ENCODE measurements at regions of chr10 and their contacts with region 1.

Region 1: DNA sequence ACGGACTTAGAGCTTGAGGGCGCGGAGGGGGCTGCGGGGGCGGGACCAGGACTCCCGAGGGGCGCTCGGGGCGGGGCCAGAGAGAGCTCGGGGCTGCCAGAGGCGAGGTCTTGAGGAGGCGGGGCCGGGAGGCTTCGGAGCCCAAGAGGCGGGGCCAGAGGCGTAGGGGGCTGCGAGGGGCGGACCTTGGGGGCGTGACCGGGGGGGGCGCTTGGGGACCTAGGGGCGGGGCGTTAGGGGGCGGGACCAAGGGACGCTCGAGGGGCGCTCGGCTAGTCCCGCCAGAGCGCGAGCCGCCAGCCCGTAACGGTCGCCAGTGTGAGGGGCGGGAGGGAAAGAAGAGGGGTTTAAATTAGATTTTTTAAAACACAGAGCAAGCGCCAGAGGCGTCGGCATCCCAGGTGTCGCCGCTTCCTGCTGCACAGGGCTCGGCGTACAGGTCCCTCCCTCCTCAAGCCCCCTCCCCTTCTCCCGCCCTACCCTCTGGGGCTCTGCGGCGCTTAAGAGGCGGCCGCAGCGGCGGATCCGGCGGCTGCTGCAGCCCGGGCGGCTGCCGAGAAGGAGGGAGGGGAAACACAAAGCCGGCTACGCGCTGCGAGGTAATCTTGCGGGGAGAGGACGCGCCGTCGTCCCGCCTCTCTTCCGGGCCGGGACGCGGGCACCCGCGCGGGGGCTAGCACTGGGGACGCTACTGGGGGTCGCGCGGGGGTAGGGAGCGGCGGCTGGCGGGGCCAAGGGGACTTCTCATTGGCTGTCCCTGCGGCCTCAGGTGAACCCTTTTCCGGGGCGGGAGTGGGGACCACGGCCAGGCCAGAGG is at the start of gene ADD3:
- DNase-seq: peak; percentile 97
- H3K4me3 ChIP-seq: peak within 1 kb of the TSS; percentile 85 to 93 (median 91)
- H3K27ac ChIP-seq: peak within 1 kb of the TSS; percentile 89 to 96 (median 94)
- H3K4me1 ChIP-seq: peaks cover 40 to 62% (median 46%) of the 10 kb centered on the region in 4 donors
- H3K27me3 ChIP-seq: peaks cover 0 to 3% (median 0%) of the 10 kb centered on the region in 4 donors
- CTCF ChIP-seq: no peak
- EP300 ChIP-seq: no peak
- POLR2A ChIP-seq: peak; percentile 36
- total RNA-seq, gene ADD3: 60.1 to 228 (median 99.2) TPM

Region 2: GRCh38 chr10:109912335-109913281 is 95.3 kb before region 1 on chr10:
- intact Hi-C with region 1: no loop called
- DNase-seq: no peak
- H3K4me3 ChIP-seq: no peak overlapping the region
- H3K27ac ChIP-seq: peak overlapping the region; percentile 37 to 75 (median 52)
- H3K4me1 ChIP-seq: peaks cover 0 to 32% (median 14%) of the 10 kb centered on the region in 4 donors
- H3K27me3 ChIP-seq: no peaks in the 10 kb centered on the region
- CTCF ChIP-seq: no peak
- EP300 ChIP-seq: no peak
- POLR2A ChIP-seq: no peak

Region 3: DNA sequence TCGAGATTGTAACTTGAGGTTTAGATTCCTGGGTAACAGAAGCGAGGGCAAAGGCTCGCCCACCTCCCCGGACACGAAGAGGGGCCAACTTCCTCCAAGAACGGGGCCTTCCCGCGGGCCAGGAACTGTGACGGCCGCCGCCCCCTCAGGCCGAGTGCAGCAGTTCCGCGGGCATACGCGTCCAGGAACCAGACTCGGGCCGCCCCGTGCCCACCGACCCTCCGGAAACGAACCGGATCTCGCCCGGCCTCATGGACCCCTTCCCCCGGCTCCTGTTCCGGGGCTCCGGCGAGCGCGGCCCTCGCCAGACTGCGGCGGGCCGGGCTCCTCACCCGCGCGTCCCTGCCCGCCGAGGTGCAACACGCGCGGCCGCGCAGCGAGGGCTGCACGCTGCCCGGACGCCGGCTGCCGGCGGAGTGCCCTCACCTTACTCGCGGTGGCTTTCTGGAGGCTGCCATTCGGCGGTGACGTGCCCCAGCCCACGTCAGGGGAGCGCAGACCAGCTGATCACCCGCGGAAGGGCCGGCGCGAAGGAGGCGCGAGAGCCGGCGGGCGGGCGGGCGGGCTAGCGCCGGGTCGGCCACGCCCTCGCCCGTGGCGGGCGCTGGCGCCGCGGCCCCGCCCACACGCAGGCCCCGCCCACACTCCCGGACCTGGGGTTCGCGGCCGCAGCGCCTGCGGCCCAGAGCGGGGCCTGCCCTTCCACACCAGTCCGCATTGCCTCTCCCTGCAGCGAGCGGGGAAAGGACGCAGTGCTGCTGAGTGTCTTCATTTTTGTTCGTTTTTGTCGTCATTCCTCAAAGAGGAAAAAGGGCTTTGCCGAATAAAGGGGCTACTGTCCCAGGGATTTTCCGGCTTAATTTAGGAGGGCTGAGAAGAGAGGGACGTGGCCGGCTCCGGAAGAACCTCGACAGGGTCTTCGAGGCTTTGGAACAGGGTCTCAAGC is 84.7 kb before region 1 on chr10 and contains the start of gene XPNPEP1:
- intact Hi-C with region 1: loop called (anchors 5 kb)
- DNase-seq: no peak
- H3K4me3 ChIP-seq: peak within 1 kb of the TSS; percentile 93 to 98 (median 95)
- H3K27ac ChIP-seq: peak within 1 kb of the TSS; percentile 95 to 97 (median 96)
- H3K4me1 ChIP-seq: peaks cover 12 to 34% (median 28%) of the 10 kb centered on the region in 4 donors
- H3K27me3 ChIP-seq: no peaks in the 10 kb centered on the region
- CTCF ChIP-seq: no peak
- EP300 ChIP-seq: no peak
- POLR2A ChIP-seq: peak; percentile 61
- total RNA-seq, gene XPNPEP1: 43.2 to 61.9 (median 48.8) TPM

Region 4: DNA sequence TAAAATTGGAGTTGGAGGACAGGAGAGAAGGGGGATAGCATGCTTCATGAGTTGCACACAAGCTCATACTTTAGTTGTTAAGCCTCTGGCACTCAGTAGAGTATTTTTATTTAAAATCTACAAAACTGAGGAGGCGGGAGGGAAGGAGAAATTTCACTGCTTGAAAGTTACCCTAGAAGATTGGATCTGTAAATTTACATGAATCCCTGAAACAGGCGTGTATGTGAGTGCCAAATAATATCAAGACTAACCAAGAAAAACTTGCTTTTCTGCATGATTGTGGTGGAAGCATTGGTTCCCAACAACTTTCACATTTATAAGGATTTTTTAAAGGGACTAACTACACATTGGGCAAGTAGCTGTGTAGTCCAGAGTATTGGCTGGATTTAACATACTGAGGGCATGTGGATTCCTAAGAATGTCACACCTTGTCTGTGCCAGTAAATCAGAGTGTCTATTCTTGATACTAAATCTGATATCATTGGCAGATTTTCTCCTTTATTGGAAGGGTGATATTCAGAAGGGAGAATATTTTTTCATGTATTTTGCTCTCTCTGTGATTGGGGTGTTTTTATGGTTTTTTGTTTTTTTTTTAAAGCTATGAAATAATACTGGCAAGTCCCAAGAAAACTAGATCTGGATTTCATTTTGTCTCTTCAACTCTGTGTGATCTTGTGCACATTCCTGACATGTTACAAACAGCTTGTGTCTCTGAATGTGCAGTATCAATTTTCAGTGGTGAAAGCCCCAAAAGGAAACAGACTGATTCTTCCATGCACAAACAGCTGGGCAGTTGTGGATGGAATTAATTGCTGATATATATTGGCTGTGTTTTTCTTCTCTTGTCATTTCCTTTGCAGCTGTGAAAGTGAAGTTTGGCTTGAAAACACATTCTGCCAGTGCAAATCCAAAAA is 67.1 kb after region 1 on chr10:
- intact Hi-C with region 1: loop called (anchors 5 kb)
- DNase-seq: no peak
- H3K4me3 ChIP-seq: no peak overlapping the region
- H3K27ac ChIP-seq: peak overlapping the region; percentile 39 to 64 (median 58)
- H3K4me1 ChIP-seq: peaks cover 64 to 80% (median 68%) of the 10 kb centered on the region in 4 donors
- H3K27me3 ChIP-seq: no peaks in the 10 kb centered on the region
- CTCF ChIP-seq: no peak
- EP300 ChIP-seq: no peak
- POLR2A ChIP-seq: no peak

Region 5: DNA sequence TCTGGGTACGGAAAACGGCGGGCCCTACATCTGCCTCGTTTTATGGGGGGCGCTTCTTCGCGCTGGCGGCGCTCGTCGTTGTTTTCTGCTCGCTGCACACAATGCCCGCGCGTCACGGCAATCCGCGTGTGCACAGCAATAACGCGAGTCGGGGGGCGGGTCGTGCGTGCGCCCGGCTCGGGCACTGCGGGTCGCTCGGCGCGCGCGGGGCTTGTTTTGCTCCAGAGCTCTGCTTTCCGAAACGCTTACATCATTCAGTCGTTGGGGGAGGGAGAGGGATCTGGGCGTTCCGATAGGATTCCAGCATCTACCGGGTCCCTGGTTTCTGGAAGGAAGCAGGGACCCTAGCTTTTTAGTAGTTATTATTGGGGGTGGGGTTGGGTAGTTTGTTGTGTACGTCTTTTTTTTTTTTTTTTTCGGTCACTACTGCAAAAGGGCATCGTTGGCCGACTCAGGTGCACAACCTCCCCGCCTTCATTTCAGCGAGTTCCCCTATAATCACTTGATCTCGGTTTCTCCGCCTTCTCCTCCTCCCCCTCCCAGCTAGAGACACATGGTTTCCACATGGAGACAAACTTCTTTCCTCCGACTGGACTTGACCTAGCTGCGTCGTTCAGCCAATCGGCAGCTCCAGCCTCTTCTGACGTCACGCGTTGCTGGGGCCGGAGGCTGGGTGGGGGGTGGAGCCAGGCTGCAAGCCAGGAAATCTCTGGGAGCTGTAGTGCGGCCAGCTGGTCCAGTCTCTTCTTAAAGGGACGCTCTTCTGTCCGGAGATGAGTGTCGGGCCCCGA is 203.0 kb after region 1 on chr10:
- intact Hi-C with region 1: loop called (anchors 10 kb)
- DNase-seq: peak; percentile 99
- H3K4me3 ChIP-seq: peak overlapping the region; percentile 80 to 91 (median 86)
- H3K27ac ChIP-seq: peak overlapping the region; percentile 94 to 100 (median 98)
- H3K4me1 ChIP-seq: peaks cover 42 to 54% (median 53%) of the 10 kb centered on the region in 4 donors
- H3K27me3 ChIP-seq: no peaks in the 10 kb centered on the region
- CTCF ChIP-seq: no peak
- EP300 ChIP-seq: peak; percentile 47
- POLR2A ChIP-seq: peak; percentile 64